ENCODE measurements at regions of chr11 and their contacts with region 1.

Region 1: GRCh38 chr11:58579192-58580129 is 598 bp downstream of the ZFP91 start:
- DNase-seq: peak; percentile 85
- H3K4me3 Mint-ChIP-seq: peak overlapping the region; percentile 94
- H3K27ac Mint-ChIP-seq: peak overlapping the region; percentile 100
- H3K4me1 Mint-ChIP-seq: peaks cover 73% of the 10 kb centered on the region
- H3K27me3 Mint-ChIP-seq: no peaks in the 10 kb centered on the region

Region 2: GRCh38 chr11:57324886-57325734 is 1254.4 kb before region 1 on chr11 and contains the start of gene TNKS1BP1:
- intact Hi-C with region 1: loop called (anchors 1 kb)
- DNase-seq: peak; percentile 86
- H3K4me3 Mint-ChIP-seq: peak within 1 kb of the TSS; percentile 85
- H3K27ac Mint-ChIP-seq: peak within 1 kb of the TSS; percentile 91
- H3K4me1 Mint-ChIP-seq: peaks cover 57% of the 10 kb centered on the region
- H3K27me3 Mint-ChIP-seq: no peaks in the 10 kb centered on the region
- total RNA-seq, gene TNKS1BP1: 22.1 and 24.3 TPM in 2 replicates

Region 3: DNA sequence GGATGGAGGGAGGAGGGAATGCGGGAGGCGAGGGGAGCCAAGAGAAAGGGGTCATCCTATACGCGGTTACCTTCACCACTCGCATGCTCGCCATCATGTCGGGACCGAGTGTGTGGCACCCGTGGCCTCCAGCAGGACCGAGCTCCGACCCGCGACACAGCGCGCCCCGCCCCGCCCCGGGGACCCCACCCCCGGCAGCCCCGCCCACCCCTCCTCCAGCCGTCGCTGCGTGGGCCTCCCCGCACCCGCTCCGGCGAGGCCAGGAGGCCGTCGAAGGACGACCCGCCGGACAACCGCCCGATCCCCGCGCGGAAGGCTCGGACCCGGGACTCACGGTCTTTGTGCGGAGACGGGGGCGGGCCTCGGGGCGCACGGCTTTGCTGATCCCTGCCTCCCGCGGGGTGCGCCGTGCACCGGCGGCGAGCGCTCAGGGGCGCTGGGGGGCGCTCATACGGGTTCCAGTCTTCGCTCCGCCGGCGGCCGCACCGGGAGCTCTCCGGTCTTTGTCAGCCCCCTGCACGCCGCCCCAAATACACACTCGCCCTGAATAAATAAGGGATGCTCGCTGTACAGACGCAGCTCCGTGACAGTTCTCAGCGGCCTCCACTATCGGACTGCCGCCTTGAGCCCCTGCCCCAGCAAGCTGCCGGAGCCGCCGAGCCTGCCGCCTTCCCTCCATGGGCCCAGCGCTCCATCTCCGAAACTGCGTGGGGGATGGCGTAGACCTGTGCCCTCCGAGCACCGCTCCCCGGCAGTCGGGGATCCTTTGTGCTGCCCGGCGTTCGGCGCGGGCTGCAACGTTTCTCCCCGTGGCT is 1011.7 kb before region 1 on chr11 and contains the start of gene UBE2L6:
- intact Hi-C with region 1: loop called (anchors 5 kb)
- DNase-seq: peak; percentile 53
- H3K4me3 Mint-ChIP-seq: peak within 1 kb of the TSS; percentile 99
- H3K27ac Mint-ChIP-seq: peak within 1 kb of the TSS; percentile 97
- H3K4me1 Mint-ChIP-seq: peaks cover 41% of the 10 kb centered on the region
- H3K27me3 Mint-ChIP-seq: no peaks in the 10 kb centered on the region
- total RNA-seq, gene UBE2L6: 155 and 163 TPM in 2 replicates

Region 4: GRCh38 chr11:57741132-57742086 is 838.1 kb before region 1 on chr11 and contains the start of gene SELENOH:
- intact Hi-C with region 1: loop called (anchors 1 kb)
- DNase-seq: peak; percentile 93
- H3K4me3 Mint-ChIP-seq: peak within 1 kb of the TSS; percentile 98
- H3K27ac Mint-ChIP-seq: peak within 1 kb of the TSS; percentile 95
- H3K4me1 Mint-ChIP-seq: peaks cover 46% of the 10 kb centered on the region
- H3K27me3 Mint-ChIP-seq: no peaks in the 10 kb centered on the region
- total RNA-seq, gene SELENOH: 211 and 232 TPM in 2 replicates

Region 5: DNA sequence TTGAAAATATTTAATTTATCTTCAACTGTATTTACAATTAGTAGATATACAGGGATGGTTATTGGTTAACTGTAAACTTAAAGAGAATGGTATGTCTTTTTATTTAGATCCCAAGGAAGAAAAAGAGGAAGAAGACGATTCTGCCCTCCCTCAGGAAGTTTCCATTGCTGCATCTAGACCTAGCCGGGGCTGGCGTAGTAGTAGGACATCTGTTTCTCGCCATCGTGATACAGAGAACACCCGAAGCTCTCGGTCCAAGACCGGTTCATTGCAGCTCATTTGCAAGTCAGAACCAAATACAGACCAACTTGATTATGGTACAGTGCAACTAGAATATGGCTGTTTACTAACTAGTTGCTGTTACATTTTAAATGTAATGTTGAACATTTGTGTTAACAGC is 30.3 kb after region 1 on chr11:
- intact Hi-C with region 1: loop called (anchors 2 kb)
- DNase-seq: no peak
- H3K4me3 Mint-ChIP-seq: no peak overlapping the region
- H3K27ac Mint-ChIP-seq: no peak overlapping the region
- H3K4me1 Mint-ChIP-seq: peaks cover 60% of the 10 kb centered on the region
- H3K27me3 Mint-ChIP-seq: no peaks in the 10 kb centered on the region

Region 6: DNA sequence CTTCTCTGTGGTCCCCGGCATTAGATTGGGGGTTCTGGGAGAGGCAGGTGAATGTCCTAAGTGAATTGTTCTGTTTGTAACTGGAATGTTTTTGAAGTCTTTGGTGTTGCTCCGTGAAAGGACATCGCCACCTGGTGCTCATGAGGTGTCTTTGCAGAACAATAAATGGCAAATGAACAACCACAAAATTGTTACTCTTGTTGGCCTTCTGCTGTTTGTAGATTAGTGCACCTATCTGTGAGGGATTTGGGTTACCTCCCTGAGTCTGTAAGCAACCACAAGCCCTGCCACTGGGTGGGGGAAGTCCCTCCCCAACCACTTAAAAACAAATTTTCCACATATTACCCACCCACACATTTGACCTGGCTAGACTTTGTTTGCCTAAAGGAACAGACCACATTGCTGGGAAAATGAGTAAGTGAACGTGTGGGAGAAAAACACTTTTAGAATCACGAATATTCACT is 628.6 kb after region 1 on chr11:
- intact Hi-C with region 1: loop called (anchors 5 kb)
- DNase-seq: peak; percentile 4
- H3K4me3 Mint-ChIP-seq: peak overlapping the region; percentile 51
- H3K27ac Mint-ChIP-seq: peak overlapping the region; percentile 83
- H3K4me1 Mint-ChIP-seq: peaks cover 30% of the 10 kb centered on the region
- H3K27me3 Mint-ChIP-seq: peaks cover 52% of the 10 kb centered on the region

Region 7: GRCh38 chr11:59857444-59858434 is 1278.3 kb after region 1 on chr11:
- intact Hi-C with region 1: loop called (anchors 5 kb)
- DNase-seq: no peak
- H3K4me3 Mint-ChIP-seq: no peak overlapping the region
- H3K27ac Mint-ChIP-seq: peak overlapping the region; percentile 80
- H3K4me1 Mint-ChIP-seq: peaks cover 29% of the 10 kb centered on the region
- H3K27me3 Mint-ChIP-seq: peaks cover 22% of the 10 kb centered on the region

Measured in activated T-helper 1 cell treated with anti-CD3 and anti-CD28 coated beads, Interleukin-12 subunit alpha, Interleukin-12 subunit beta, Interleukin-2, Interleukin-4 antibody, amounts not matched to agents 30 ng/mL and 10 ng/mL and 1 ng/mL, durations not matched to agents 14 hours and 24 hours and 36 hours (primary cell).